T-cell (primary cell): ENCODE measurements at regions of chr7 and their contacts with region 1.

Region 1: GRCh38 chr7:38660427-38661099 is 29.4 kb upstream of the AMPH start:
- DNase-seq: peak in 15 of 35 experiments; percentile 1 to 56 (median 11)
- ATAC-seq: peak; percentile 53 to 73 (median 56)
- H3K4me3 ChIP-seq: no peak overlapping the region
- H3K4me3 Mint-ChIP-seq: no peak overlapping the region
- H3K27ac ChIP-seq: no peak overlapping the region
- H3K27ac Mint-ChIP-seq: no peak overlapping the region
- H3K4me1 ChIP-seq: peaks cover 2% of the 10 kb centered on the region in 2 experiments
- H3K4me1 Mint-ChIP-seq: peaks cover 2 to 5% (median 2%) of the 10 kb centered on the region in 3 donors
- H3K27me3 ChIP-seq: peaks cover 0 to 18% of the 10 kb centered on the region in 2 experiments
- H3K27me3 Mint-ChIP-seq: peaks cover 25 to 30% of the 10 kb centered on the region in 2 donors

Region 2: GRCh38 chr7:38398725-38399321 is 261.7 kb before region 1 on chr7:
- CTCF ChIA-PET with region 1: interaction called, 20 to 25 read pairs
- POLR2A ChIA-PET with region 1: no interaction called
- DNase-seq: peak in 34 of 35 experiments; percentile 7 to 74 (median 48)
- ATAC-seq: peak; percentile 46 to 73 (median 62)
- H3K4me3 ChIP-seq: no peak overlapping the region
- H3K4me3 Mint-ChIP-seq: no peak overlapping the region
- H3K27ac ChIP-seq: no peak overlapping the region
- H3K27ac Mint-ChIP-seq: no peak overlapping the region
- H3K4me1 ChIP-seq: no peaks in the 10 kb centered on the region
- H3K4me1 Mint-ChIP-seq: peaks cover 1 to 6% (median 5%) of the 10 kb centered on the region in 3 donors
- H3K27me3 ChIP-seq: peaks cover 0 to 3% of the 10 kb centered on the region in 2 experiments
- H3K27me3 Mint-ChIP-seq: peaks cover 8 to 9% of the 10 kb centered on the region in 2 donors